ENCODE measurements at regions of chr7 and their contacts with region 1.

Region 1: GRCh38 chr7:88546808-88547207 is 212.7 kb upstream of the ZNF804B start:
- DNase-seq: peak; percentile 62
- ATAC-seq: peak; percentile 82
- H3K4me3 ChIP-seq: no peak overlapping the region
- H3K27ac ChIP-seq: no peak overlapping the region
- H3K4me1 ChIP-seq: no peaks in the 10 kb centered on the region
- H3K27me3 ChIP-seq: no peaks in the 10 kb centered on the region
- CTCF ChIP-seq: peak; percentile 68

Region 2: GRCh38 chr7:88835147-88835728 is 288.4 kb after region 1 on chr7:
- CTCF ChIA-PET with region 1: no interaction called
- POLR2A ChIA-PET with region 1: no interaction called
- intact Hi-C with region 1: loop called (anchors 2 kb)
- DNase-seq: peak; percentile 57
- ATAC-seq: peak; percentile 54
- H3K4me3 ChIP-seq: no peak overlapping the region
- H3K27ac ChIP-seq: no peak overlapping the region
- H3K4me1 ChIP-seq: no peaks in the 10 kb centered on the region
- H3K27me3 ChIP-seq: no peaks in the 10 kb centered on the region
- CTCF ChIP-seq: peak; percentile 56

Region 3: GRCh38 chr7:88842201-88842600 is 295.4 kb after region 1 on chr7:
- CTCF ChIA-PET with region 1: interaction called, 20 read pairs
- POLR2A ChIA-PET with region 1: no interaction called
- intact Hi-C with region 1: no loop called
- DNase-seq: no peak
- ATAC-seq: no peak
- H3K4me3 ChIP-seq: no peak overlapping the region
- H3K27ac ChIP-seq: no peak overlapping the region
- H3K4me1 ChIP-seq: no peaks in the 10 kb centered on the region
- H3K27me3 ChIP-seq: no peaks in the 10 kb centered on the region
- CTCF ChIP-seq: no peak

Measured in PC-3 (cell line).